ENCODE measurements at regions of chr4 and their contacts with region 1.

Region 1: GRCh38 chr4:1809754-1810511 is 16.8 kb downstream of the FGFR3 start:
- DNase-seq: peak; percentile 66
- H3K4me3 ChIP-seq: no peak overlapping the region
- H3K27ac ChIP-seq: no peak overlapping the region
- H3K4me1 ChIP-seq: no peaks in the 10 kb centered on the region
- H3K27me3 ChIP-seq: no peaks in the 10 kb centered on the region
- CTCF ChIP-seq: peak; percentile 97 to 99
- POLR2A ChIP-seq: no peak

Region 2: GRCh38 chr4:1752284-1753041 is 57.5 kb before region 1 on chr4:
- CTCF ChIA-PET with region 1: interaction called, 198 read pairs
- POLR2A ChIA-PET with region 1: interaction called, 5 read pairs
- dilution Hi-C with region 1: no loop called
- intact Hi-C with region 1: loop called (anchors 1 kb)
- DNase-seq: peak; percentile 16
- H3K4me3 ChIP-seq: no peak overlapping the region
- H3K27ac ChIP-seq: no peak overlapping the region
- H3K4me1 ChIP-seq: peaks cover 9% of the 10 kb centered on the region
- H3K27me3 ChIP-seq: no peaks in the 10 kb centered on the region
- CTCF ChIP-seq: no peak
- POLR2A ChIP-seq: no peak